Calu3 (cell line): ENCODE measurements at regions of chr17 and their contacts with region 1.

Region 1: DNA sequence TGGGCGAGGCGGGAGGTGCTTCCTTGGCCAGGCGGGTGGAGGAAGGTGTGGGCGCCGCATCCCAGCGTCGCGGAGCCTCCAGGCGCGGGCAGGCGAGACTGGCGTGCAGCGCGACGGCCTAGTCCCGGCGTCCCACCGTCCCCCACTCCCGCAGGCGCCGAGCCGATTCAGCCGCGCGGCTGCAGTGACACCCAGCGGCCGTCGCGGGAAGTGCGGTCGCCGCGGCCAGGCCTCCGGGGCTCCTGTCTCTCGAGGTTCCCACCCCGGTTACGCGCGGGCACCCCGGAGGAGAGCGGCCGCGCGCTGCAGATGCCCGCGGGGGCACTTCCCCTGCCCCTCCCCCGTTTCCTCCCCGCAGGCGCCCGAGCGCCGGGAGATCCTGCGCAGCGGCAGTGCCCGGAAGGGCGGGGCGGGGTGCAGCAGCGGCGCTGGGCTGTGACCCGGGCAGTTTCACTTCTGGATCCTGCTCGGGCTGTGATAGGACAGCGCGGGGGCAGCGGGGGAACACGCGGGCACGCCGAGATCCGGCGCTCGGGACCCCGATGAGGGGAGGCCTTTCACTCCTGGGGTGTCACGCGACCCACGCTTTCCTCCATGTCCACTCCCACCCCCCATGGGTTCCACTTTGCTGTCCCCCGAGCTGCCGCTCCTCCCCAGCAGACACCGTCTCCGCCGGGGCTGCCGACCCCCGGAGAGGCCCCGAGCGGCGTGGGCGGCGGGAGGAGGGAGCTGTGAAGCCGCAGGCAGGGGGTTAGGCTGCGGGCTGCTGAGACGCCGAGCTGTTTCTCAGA is 16.6 kb downstream of the GRB7 start:
- DNase-seq: peak; percentile 100
- H3K4me3 Mint-ChIP-seq: peak overlapping the region; percentile 63
- H3K27ac Mint-ChIP-seq: peak overlapping the region; percentile 12
- H3K4me1 Mint-ChIP-seq: peaks cover 58% of the 10 kb centered on the region
- H3K27me3 Mint-ChIP-seq: peaks cover 35% of the 10 kb centered on the region
- CTCF ChIP-seq: no peak

Region 2: GRCh38 chr17:39553341-39553945 is 200.9 kb before region 1 on chr17:
- CTCF ChIA-PET with region 1: interaction called, 3 read pairs
- intact Hi-C with region 1: loop called (anchors 5 kb)
- DNase-seq: no peak
- H3K4me3 Mint-ChIP-seq: no peak overlapping the region
- H3K27ac Mint-ChIP-seq: no peak overlapping the region
- H3K4me1 Mint-ChIP-seq: no peaks in the 10 kb centered on the region
- H3K27me3 Mint-ChIP-seq: no peaks in the 10 kb centered on the region
- CTCF ChIP-seq: no peak

Region 3: GRCh38 chr17:39704821-39705551 is 49.4 kb before region 1 on chr17:
- CTCF ChIA-PET with region 1: interaction called, 34,714 read pairs
- intact Hi-C with region 1: loop called (anchors 1 kb)
- DNase-seq: peak; percentile 99
- H3K4me3 Mint-ChIP-seq: peak overlapping the region; percentile 71
- H3K27ac Mint-ChIP-seq: peak overlapping the region; percentile 67
- H3K4me1 Mint-ChIP-seq: peaks cover 92% of the 10 kb centered on the region
- H3K27me3 Mint-ChIP-seq: no peaks in the 10 kb centered on the region
- CTCF ChIP-seq: no peak

Region 4: DNA sequence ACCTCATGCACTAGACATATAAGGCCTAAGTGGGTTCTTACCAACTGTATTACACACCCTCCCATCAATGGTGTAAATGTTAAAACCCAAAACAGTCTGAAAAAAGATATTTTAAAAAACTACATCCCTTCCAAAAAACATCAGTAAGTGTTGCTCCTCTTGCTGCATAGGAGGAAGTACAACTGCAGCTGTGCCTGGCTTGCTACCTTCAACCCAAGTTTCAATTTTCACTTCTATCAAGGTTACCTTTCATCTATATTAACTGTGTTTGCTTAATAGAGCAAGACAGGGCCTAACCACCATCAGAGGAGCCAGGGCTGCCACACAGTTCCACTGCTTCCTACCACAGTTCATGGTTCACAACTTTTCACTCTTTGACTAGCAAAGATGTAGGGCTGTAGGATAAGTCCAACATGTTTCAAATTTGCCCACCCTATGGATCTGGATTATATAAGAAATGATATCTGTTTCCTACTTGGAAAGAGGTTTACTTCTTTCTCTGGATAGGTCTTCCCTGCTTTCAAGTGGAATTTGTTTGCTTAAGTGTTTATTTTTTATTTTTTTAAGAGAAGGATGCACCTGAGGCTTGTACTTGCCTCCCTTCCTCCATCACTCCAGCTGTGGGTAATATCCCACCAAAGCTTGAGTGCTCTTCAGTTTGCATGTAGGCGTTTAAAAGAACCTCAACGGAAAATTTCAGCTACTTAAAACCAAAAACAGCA is 40.1 kb after region 1 on chr17:
- CTCF ChIA-PET with region 1: interaction called, 78 read pairs
- intact Hi-C with region 1: no loop called
- DNase-seq: peak; percentile 73
- H3K4me3 Mint-ChIP-seq: no peak overlapping the region
- H3K27ac Mint-ChIP-seq: no peak overlapping the region
- H3K4me1 Mint-ChIP-seq: no peaks in the 10 kb centered on the region
- H3K27me3 Mint-ChIP-seq: no peaks in the 10 kb centered on the region
- CTCF ChIP-seq: no peak

Region 5: DNA sequence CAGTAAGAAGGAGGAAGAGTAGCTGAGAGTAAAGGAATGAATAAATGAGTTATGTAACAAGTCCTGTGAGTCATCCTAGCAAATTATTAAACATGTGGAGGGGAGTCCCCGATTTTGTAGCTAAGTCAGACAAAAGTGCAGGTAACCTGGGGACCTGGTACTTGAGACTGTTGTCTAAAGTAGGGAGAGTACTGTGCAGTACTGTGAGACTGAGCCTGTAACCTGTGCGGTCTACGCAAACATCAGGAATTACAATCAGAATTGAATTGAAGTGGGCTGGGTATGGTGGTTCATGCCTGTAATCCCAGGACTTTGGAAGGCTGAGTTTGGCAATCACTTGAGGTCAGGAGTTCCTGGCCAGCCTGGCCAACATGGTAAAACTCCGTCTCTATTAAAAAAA is 74.1 kb after region 1 on chr17:
- CTCF ChIA-PET with region 1: interaction called, 1,211 read pairs
- intact Hi-C with region 1: loop called (anchors 1 kb)
- DNase-seq: peak; percentile 100
- H3K4me3 Mint-ChIP-seq: peak overlapping the region; percentile 36
- H3K27ac Mint-ChIP-seq: peak overlapping the region; percentile 48
- H3K4me1 Mint-ChIP-seq: peaks cover 17% of the 10 kb centered on the region
- H3K27me3 Mint-ChIP-seq: no peaks in the 10 kb centered on the region
- CTCF ChIP-seq: no peak

Region 6: GRCh38 chr17:39894681-39895376 is 140.5 kb after region 1 on chr17:
- CTCF ChIA-PET with region 1: interaction called, 300 read pairs
- intact Hi-C with region 1: no loop called
- DNase-seq: peak; percentile 63
- H3K4me3 Mint-ChIP-seq: no peak overlapping the region
- H3K27ac Mint-ChIP-seq: no peak overlapping the region
- H3K4me1 Mint-ChIP-seq: peaks cover 23% of the 10 kb centered on the region
- H3K27me3 Mint-ChIP-seq: peaks cover 15% of the 10 kb centered on the region
- CTCF ChIP-seq: no peak

Region 7: DNA sequence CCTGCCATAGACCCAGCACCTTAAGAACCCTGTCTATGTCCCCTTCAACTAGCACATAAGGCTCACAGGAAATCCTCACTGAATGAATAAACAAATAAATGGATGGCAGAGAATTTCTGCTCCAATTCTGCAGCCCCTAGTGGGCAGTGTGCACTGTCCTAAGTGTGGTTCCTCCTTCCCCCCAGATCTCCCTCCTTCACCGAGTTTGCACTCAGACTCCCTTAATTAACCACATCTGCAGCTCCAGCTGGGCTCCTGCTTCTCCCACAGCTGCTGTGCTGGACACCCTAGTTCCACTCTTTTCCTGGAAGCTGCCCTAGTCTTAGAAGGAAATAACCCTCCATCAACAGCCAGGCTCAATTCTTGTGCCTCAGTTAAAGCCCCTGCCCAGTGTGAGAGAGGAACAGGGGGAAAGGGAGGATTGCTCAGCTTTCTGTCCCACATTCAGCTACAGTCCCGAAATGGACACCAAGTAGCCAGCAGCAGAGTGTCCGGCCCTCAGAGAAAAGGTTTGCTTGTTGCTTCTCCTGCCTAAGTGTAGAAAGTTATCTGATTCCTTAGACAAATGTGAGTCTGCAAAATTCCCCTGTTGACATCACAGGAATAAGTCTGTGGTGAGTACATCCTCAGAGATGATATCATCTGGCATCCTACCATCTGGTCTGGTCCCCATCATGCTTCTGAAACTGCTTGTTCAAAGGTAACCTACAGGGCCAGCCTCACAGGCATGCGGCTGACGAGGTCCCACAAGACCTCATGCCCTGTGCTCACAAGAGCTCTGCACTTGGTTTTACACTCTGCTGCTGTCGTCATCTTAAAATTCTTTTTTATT is 185.4 kb after region 1 on chr17:
- CTCF ChIA-PET with region 1: interaction called, 1,070 read pairs
- intact Hi-C with region 1: no loop called
- DNase-seq: peak; percentile 76
- H3K4me3 Mint-ChIP-seq: no peak overlapping the region
- H3K27ac Mint-ChIP-seq: no peak overlapping the region
- H3K4me1 Mint-ChIP-seq: peaks cover 12% of the 10 kb centered on the region
- H3K27me3 Mint-ChIP-seq: peaks cover 63% of the 10 kb centered on the region
- CTCF ChIP-seq: no peak